Panc1 (cell line): ENCODE measurements at regions of chr2 and their contacts with region 1.

Region 1: GRCh38 chr2:231482806-231483391 is 18.6 kb upstream of the NCL start:
- DNase-seq: no peak
- ATAC-seq: peak; percentile 96
- H3K4me3 ChIP-seq: peak overlapping the region in 1 of 2 experiments; percentile 21; a peak in 2 of 4 replicates
- H3K27ac ChIP-seq: 0 out of 2 replicates have a peak overlapping the region, but pooled peaks have one; percentile 15
- H3K4me1 ChIP-seq: no peaks in the 10 kb centered on the region
- H3K27me3 ChIP-seq: no peaks in the 10 kb centered on the region
- CTCF ChIP-seq: peak; percentile 98

Region 2: DNA sequence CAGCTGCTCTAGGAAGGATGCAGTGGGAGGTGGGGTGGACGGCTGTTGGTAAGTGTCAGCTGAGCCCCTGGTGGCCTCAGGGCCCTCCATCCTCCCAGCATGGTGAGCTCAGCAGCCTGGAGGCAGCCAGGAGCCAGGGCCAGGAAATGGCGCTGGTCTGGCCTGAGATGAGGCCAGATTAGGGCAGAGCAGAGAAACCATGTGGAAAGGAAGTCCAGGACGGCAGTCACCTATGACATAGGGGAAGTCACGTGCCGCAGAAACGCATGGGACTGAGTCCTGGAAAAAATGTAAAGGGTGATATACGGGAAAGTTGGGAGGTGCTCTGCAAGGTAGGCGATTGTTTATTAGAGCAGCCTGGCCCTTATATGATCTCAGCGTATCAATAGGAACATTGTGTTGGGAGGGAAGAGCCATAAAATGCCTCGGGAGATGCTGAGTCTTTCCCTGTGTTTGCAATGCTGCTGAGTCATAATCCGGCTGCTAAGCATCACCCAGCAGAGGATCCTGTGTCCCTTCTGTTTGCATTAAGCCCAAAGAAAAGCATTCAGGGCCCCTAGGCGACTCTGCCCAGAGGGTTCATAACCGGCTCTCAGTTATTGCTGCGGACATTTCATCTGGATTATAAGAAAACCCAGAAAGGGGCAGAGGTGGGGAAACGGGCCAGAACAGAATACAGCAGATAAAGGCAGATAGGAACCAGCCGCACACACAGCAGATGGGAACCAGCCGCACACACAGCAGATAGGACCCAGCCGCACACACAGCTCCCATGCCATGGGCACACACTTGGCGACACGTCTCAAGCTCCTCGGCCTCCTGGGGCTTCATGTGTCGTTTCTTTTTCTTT is 117.7 kb before region 1 on chr2:
- CTCF ChIA-PET with region 1: no interaction called
- POLR2A ChIA-PET with region 1: no interaction called
- in situ Hi-C with region 1: no loop called
- intact Hi-C with region 1: no loop called
- DNase-seq: peak; percentile 82
- ATAC-seq: peak; percentile 89
- H3K4me3 ChIP-seq: peak overlapping the region in 1 of 2 experiments; percentile 27; a peak in 2 of 4 replicates
- H3K27ac ChIP-seq: peak overlapping the region; percentile 97
- H3K4me1 ChIP-seq: peaks cover 65% of the 10 kb centered on the region
- H3K27me3 ChIP-seq: no peaks in the 10 kb centered on the region
- CTCF ChIP-seq: no peak

Region 3: DNA sequence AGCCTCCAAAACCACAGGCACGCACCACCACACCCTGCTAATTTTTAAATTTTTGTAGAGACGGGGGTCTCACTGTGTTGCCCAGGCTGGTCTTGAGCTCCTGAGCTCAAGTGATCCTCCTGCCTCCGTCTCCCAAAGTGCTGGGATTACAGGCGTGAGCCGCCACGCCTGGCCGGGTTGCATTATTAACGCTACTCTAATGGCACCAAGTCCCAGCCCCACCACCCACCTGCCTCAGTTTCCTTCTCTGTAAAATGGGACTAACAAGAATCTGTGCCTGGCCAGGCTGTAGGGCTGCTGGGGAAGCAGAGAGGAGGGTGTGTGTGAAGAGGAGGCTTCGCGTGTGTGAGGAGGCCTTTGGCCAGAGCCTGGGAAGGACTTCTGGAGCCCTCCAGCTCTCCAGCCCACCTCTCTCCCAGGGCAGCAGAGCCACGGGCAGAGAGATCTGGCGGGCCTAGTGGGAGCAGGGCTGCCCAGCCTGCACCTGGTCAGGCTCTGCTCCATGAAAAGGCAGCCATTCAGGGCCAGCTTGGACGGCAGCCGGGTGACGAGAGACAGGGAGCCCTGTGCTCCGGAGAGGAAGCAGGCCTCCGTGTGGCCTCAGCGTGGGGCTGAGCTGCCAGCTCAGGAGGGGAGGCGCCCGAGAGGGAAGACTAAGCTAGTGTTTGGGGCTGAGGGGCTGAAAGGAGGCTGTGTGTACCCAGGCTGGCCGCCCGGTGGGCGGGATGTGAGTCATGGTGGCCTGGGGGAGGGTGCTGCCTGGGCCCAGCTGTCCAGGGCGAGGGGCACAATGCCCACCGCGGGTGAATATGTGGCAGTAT is 94.8 kb before region 1 on chr2:
- CTCF ChIA-PET with region 1: no interaction called
- POLR2A ChIA-PET with region 1: no interaction called
- in situ Hi-C with region 1: no loop called
- intact Hi-C with region 1: no loop called
- DNase-seq: no peak
- ATAC-seq: peak; percentile 83
- H3K4me3 ChIP-seq: no peak overlapping the region
- H3K27ac ChIP-seq: peak overlapping the region; percentile 88
- H3K4me1 ChIP-seq: peaks cover 51% of the 10 kb centered on the region
- H3K27me3 ChIP-seq: no peaks in the 10 kb centered on the region
- CTCF ChIP-seq: no peak

Region 4: GRCh38 chr2:231557571-231558237 is 74.8 kb after region 1 on chr2:
- CTCF ChIA-PET with region 1: interaction called, 4 read pairs
- POLR2A ChIA-PET with region 1: no interaction called
- in situ Hi-C with region 1: no loop called
- intact Hi-C with region 1: loop called (anchors 2 kb)
- DNase-seq: peak; percentile 50
- ATAC-seq: peak; percentile 97
- H3K4me3 ChIP-seq: no peak overlapping the region
- H3K27ac ChIP-seq: no peak overlapping the region
- H3K4me1 ChIP-seq: no peaks in the 10 kb centered on the region; the same call in none of the 2 replicates
- H3K27me3 ChIP-seq: no peaks in the 10 kb centered on the region
- CTCF ChIP-seq: peak; percentile 70; the same call in 1 of the 2 replicates